HepG2 (cell line): ENCODE measurements at regions of chr11 and their contacts with region 1.

Region 1: DNA sequence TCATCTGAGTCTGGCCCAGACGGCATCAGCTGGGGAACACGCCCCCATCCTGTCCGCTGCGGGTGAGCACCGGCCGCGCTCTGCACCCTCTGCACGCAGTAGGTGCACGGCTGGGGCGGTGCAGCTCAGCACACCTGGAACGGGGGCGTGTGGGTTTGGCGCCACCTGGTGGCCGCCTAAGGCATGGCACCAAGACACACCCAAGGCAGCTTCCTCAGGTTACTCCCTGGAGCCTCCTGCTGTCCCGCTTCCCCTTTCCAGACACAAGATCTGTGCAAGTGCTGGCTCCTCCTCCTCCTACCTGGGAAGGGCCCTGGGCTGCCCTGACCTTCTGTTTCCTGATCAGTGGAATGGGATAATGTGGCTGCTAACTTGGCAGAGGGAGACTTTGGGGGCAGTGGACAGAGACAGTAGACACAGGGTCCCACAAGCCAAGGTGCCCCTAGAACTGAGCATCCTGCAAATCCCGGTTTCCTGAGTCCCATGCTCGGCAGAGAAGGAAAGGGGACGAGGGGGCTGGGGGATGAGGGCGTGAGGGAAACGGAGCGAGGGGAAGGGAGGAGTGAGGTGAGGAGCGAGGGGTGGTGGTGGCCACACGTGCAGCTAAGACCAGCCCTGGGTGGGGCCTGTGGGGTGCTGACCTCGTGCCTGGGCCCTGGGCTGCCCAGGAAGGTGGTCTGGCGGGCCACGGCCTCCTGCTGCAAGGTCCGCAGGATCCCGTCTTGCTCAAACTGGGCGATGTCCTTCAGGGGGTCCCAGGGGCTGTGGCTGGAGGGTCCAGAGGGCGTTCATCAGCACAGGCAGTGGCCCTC is 34.8 kb upstream of the CARS1 start:
- DNase-seq: peak; percentile 56
- ATAC-seq: peak; percentile 67
- H3K4me3 ChIP-seq: no peak overlapping the region
- H3K27ac ChIP-seq: no peak overlapping the region
- H3K4me1 ChIP-seq: peaks cover 30% of the 10 kb centered on the region
- H3K27me3 ChIP-seq: peaks cover 13 to 65% of the 10 kb centered on the region in 2 experiments
- CTCF ChIP-seq: peak; percentile 98
- EP300 ChIP-seq: no peak
- POLR2A ChIP-seq: no peak
- RAD21 ChIP-seq: peak; percentile 98

Region 2: GRCh38 chr11:2837096-2837601 is 254.8 kb before region 1 on chr11:
- CTCF ChIA-PET with region 1: no interaction called
- POLR2A ChIA-PET with region 1: no interaction called
- in situ Hi-C with region 1: no loop called
- intact Hi-C with region 1: no loop called
- DNase-seq: peak; percentile 62
- ATAC-seq: peak; percentile 79
- H3K4me3 ChIP-seq: peak overlapping the region in 1 of 3 experiments; percentile 43; a peak in 2 of 6 replicates
- H3K27ac ChIP-seq: no peak overlapping the region
- H3K4me1 ChIP-seq: peaks cover 45% of the 10 kb centered on the region
- H3K27me3 ChIP-seq: peaks cover 7 to 80% of the 10 kb centered on the region in 2 experiments
- CTCF ChIP-seq: 0 out of 2 replicates have a peak, but pooled peaks have one; percentile 13
- EP300 ChIP-seq: no peak
- POLR2A ChIP-seq: no peak
- RAD21 ChIP-seq: no peak

Region 3: GRCh38 chr11:3037040-3037944 is 54.7 kb before region 1 on chr11:
- CTCF ChIA-PET with region 1: interaction called, 53 read pairs
- POLR2A ChIA-PET with region 1: no interaction called
- in situ Hi-C with region 1: loop called (anchors 5 kb)
- intact Hi-C with region 1: loop called (anchors 1 kb)
- DNase-seq: peak; percentile 66
- ATAC-seq: peak; percentile 96
- H3K4me3 ChIP-seq: no peak overlapping the region
- H3K27ac ChIP-seq: no peak overlapping the region
- H3K4me1 ChIP-seq: no peaks in the 10 kb centered on the region
- H3K27me3 ChIP-seq: no peaks in the 10 kb centered on the region
- CTCF ChIP-seq: peak; percentile 85
- EP300 ChIP-seq: no peak
- POLR2A ChIP-seq: no peak
- RAD21 ChIP-seq: peak; percentile 85

Region 4: DNA sequence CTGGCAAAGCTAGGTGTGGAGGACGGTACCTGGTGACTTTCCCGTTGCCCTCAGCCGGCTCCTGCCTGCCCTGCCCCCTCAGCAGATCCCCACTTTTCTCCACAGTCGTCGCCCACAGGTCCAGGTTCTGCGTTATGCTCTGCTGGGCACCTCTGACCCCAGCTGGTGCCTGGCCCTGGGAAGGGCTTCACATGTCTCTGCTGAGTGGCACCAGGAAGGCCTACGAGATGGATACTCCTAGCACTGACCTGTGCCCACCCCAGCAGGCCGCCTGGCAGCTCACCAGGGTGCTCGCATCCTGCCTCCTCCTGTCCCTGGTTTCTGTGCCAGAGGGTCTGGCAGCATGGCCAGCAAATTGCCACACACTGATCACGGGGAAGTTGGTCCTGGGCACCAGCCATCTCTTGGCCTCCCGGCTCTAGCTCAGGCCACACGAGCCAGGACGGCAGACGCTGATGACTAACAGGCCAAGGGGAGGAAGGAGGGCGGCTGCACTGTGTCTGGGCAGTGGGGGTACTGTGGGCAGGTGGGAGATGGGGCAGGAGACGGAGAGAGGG is 48.6 kb before region 1 on chr11:
- CTCF ChIA-PET with region 1: interaction called, 53 read pairs
- POLR2A ChIA-PET with region 1: no interaction called
- in situ Hi-C with region 1: loop called (anchors 5 kb)
- intact Hi-C with region 1: no loop called
- DNase-seq: no peak
- ATAC-seq: no peak
- H3K4me3 ChIP-seq: no peak overlapping the region
- H3K27ac ChIP-seq: no peak overlapping the region
- H3K4me1 ChIP-seq: no peaks in the 10 kb centered on the region
- H3K27me3 ChIP-seq: no peaks in the 10 kb centered on the region
- CTCF ChIP-seq: no peak
- EP300 ChIP-seq: no peak
- POLR2A ChIP-seq: no peak
- RAD21 ChIP-seq: no peak

Region 5: GRCh38 chr11:3057069-3057963 is 34.7 kb before region 1 on chr11 and contains the start of gene CARS1:
- CTCF ChIA-PET with region 1: no interaction called
- POLR2A ChIA-PET with region 1: interaction called, 5 read pairs
- in situ Hi-C with region 1: no loop called
- intact Hi-C with region 1: loop called (anchors 5 kb)
- DNase-seq: peak; percentile 91
- ATAC-seq: peak; percentile 96
- H3K4me3 ChIP-seq: peak within 1 kb of the TSS; percentile 95 to 100 (median 99)
- H3K27ac ChIP-seq: peak within 1 kb of the TSS; percentile 54
- H3K4me1 ChIP-seq: peaks cover 28% of the 10 kb centered on the region
- H3K27me3 ChIP-seq: peaks cover 2 to 4% of the 10 kb centered on the region in 2 experiments; a peak in 3 of 5 replicates
- CTCF ChIP-seq: no peak; the same call in 1 of the 2 replicates
- EP300 ChIP-seq: peak in 1 of 2 experiments; percentile 29; a peak in 1 of 4 replicates
- POLR2A ChIP-seq: peak in 1 of 2 experiments; percentile 74; a peak in 2 of 4 replicates
- RAD21 ChIP-seq: no peak
- total RNA-seq, gene CARS1: 32.1 and 33.8 TPM in 2 replicates

Region 6: GRCh38 chr11:3245071-3245470 is 153.1 kb after region 1 on chr11:
- CTCF ChIA-PET with region 1: no interaction called
- POLR2A ChIA-PET with region 1: no interaction called
- in situ Hi-C with region 1: no loop called
- intact Hi-C with region 1: no loop called
- DNase-seq: no peak
- ATAC-seq: no peak
- H3K4me3 ChIP-seq: no peak overlapping the region
- H3K27ac ChIP-seq: no peak overlapping the region
- H3K4me1 ChIP-seq: no peaks in the 10 kb centered on the region
- H3K27me3 ChIP-seq: peaks cover 0 to 2% of the 10 kb centered on the region in 2 experiments; a peak in 2 of 5 replicates
- CTCF ChIP-seq: no peak
- EP300 ChIP-seq: no peak
- POLR2A ChIP-seq: no peak
- RAD21 ChIP-seq: no peak